Caco-2 (cell line): ENCODE measurements at regions of chr10 and their contacts with region 1.

Region 1: GRCh38 chr10:51367127-51367526 is 292.8 kb downstream of the PRKG1 start:
- DNase-seq: no peak
- H3K4me3 ChIP-seq: no peak overlapping the region
- H3K4me3 Mint-ChIP-seq: no peak overlapping the region
- H3K27ac Mint-ChIP-seq: no peak overlapping the region
- H3K4me1 ChIP-seq: peaks cover 4% of the 10 kb centered on the region; the same call in 1 of the 2 replicates
- H3K4me1 Mint-ChIP-seq: no peaks in the 10 kb centered on the region
- H3K27me3 ChIP-seq: no peaks in the 10 kb centered on the region
- H3K27me3 Mint-ChIP-seq: peaks cover 8% of the 10 kb centered on the region
- CTCF ChIP-seq: no peak

Region 2: DNA sequence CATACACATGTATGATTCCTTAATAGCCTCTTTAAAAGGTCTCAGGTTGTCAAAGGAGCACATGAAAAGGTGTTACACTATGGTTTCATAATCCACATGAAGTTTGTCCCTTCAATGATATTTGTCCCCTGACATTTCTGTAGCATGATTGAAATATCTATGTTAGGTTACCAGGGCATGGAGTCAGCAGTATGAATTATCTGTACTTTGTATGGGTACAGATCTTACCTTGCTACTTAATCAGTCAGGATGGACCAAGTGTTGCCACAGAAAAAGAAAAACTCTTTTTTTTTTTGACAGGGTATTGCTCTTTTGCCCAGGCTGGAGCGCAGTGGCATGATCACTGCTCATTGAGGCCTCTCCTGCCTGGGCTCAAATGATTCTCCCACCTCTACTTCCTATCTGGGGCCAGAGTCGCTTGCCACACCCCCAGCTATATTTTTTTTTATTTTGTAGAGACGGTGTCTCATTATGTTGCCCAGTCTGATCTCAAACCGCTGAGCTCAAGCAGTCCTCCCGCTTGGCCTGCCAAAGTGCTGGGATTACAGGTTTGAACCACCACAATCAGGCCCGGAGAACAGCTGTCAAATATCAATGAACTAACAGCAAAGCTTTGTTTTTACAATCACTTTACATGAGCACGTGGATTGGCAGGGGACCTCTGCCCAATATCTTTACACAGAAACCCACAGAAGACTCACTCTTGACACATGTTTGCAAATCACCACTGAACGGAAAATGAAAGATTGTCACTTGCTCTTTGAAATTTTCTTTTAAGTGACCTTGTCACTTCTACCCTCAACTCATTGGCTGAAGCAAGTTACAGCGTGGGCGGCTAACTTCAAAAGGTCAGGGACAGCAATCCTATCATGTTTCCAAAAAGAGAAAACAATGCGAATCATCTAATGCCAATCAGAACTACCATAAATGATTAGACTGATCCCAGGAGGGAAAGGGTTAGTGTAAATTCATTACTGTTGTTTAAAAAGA is 152.6 kb before region 1 on chr10:
- CTCF ChIA-PET with region 1: no interaction called
- POLR2A ChIA-PET with region 1: no interaction called
- intact Hi-C with region 1: no loop called
- DNase-seq: no peak
- H3K4me3 ChIP-seq: no peak overlapping the region
- H3K4me3 Mint-ChIP-seq: no peak overlapping the region
- H3K27ac Mint-ChIP-seq: no peak overlapping the region
- H3K4me1 ChIP-seq: no peaks in the 10 kb centered on the region
- H3K4me1 Mint-ChIP-seq: no peaks in the 10 kb centered on the region
- H3K27me3 ChIP-seq: no peaks in the 10 kb centered on the region
- H3K27me3 Mint-ChIP-seq: peaks cover 5% of the 10 kb centered on the region
- CTCF ChIP-seq: no peak

Region 3: GRCh38 chr10:51297438-51297837 is 69.7 kb before region 1 on chr10:
- CTCF ChIA-PET with region 1: no interaction called
- POLR2A ChIA-PET with region 1: no interaction called
- intact Hi-C with region 1: no loop called
- DNase-seq: no peak
- H3K4me3 ChIP-seq: no peak overlapping the region
- H3K4me3 Mint-ChIP-seq: no peak overlapping the region
- H3K27ac Mint-ChIP-seq: no peak overlapping the region
- H3K4me1 ChIP-seq: no peaks in the 10 kb centered on the region
- H3K4me1 Mint-ChIP-seq: no peaks in the 10 kb centered on the region
- H3K27me3 ChIP-seq: no peaks in the 10 kb centered on the region
- H3K27me3 Mint-ChIP-seq: peaks cover 16% of the 10 kb centered on the region
- CTCF ChIP-seq: no peak

Region 4: GRCh38 chr10:51479711-51480110 is 112.6 kb after region 1 on chr10:
- CTCF ChIA-PET with region 1: no interaction called
- POLR2A ChIA-PET with region 1: no interaction called
- intact Hi-C with region 1: no loop called
- DNase-seq: no peak
- H3K4me3 ChIP-seq: no peak overlapping the region
- H3K4me3 Mint-ChIP-seq: no peak overlapping the region
- H3K27ac Mint-ChIP-seq: no peak overlapping the region
- H3K4me1 ChIP-seq: no peaks in the 10 kb centered on the region
- H3K4me1 Mint-ChIP-seq: no peaks in the 10 kb centered on the region
- H3K27me3 ChIP-seq: no peaks in the 10 kb centered on the region
- H3K27me3 Mint-ChIP-seq: peaks cover 6% of the 10 kb centered on the region
- CTCF ChIP-seq: no peak

Region 5: GRCh38 chr10:51547941-51548340 is 180.8 kb after region 1 on chr10:
- CTCF ChIA-PET with region 1: interaction called, 10 read pairs
- POLR2A ChIA-PET with region 1: no interaction called
- intact Hi-C with region 1: no loop called
- DNase-seq: no peak
- H3K4me3 ChIP-seq: no peak overlapping the region
- H3K4me3 Mint-ChIP-seq: no peak overlapping the region
- H3K27ac Mint-ChIP-seq: no peak overlapping the region
- H3K4me1 ChIP-seq: no peaks in the 10 kb centered on the region
- H3K4me1 Mint-ChIP-seq: no peaks in the 10 kb centered on the region
- H3K27me3 ChIP-seq: no peaks in the 10 kb centered on the region
- H3K27me3 Mint-ChIP-seq: no peaks in the 10 kb centered on the region
- CTCF ChIP-seq: no peak